Activated T-helper 1 cell treated with anti-CD3 and anti-CD28 coated beads, Interleukin-12 subunit alpha, Interleukin-12 subunit beta, Interleukin-2, Interleukin-4 antibody, amounts not matched to agents 30 ng/mL and 10 ng/mL and 1 ng/mL, durations not matched to agents 14 hours and 24 hours and 36 hours (primary cell): ENCODE measurements at regions of chr19 and their contacts with region 1.

Region 1: GRCh38 chr19:48738557-48739399 is 1.6 kb downstream of the RASIP1 start:
- DNase-seq: peak; percentile 85
- H3K4me3 Mint-ChIP-seq: peak overlapping the region; percentile 64
- H3K27ac Mint-ChIP-seq: peak overlapping the region; percentile 52
- H3K4me1 Mint-ChIP-seq: peaks cover 13% of the 10 kb centered on the region
- H3K27me3 Mint-ChIP-seq: no peaks in the 10 kb centered on the region

Region 2: GRCh38 chr19:48674921-48675824 is 63.6 kb before region 1 on chr19:
- intact Hi-C with region 1: loop called (anchors 2 kb)
- DNase-seq: peak; percentile 69
- H3K4me3 Mint-ChIP-seq: no peak overlapping the region
- H3K27ac Mint-ChIP-seq: no peak overlapping the region
- H3K4me1 Mint-ChIP-seq: peaks cover 8% of the 10 kb centered on the region
- H3K27me3 Mint-ChIP-seq: peaks cover 4% of the 10 kb centered on the region

Region 3: DNA sequence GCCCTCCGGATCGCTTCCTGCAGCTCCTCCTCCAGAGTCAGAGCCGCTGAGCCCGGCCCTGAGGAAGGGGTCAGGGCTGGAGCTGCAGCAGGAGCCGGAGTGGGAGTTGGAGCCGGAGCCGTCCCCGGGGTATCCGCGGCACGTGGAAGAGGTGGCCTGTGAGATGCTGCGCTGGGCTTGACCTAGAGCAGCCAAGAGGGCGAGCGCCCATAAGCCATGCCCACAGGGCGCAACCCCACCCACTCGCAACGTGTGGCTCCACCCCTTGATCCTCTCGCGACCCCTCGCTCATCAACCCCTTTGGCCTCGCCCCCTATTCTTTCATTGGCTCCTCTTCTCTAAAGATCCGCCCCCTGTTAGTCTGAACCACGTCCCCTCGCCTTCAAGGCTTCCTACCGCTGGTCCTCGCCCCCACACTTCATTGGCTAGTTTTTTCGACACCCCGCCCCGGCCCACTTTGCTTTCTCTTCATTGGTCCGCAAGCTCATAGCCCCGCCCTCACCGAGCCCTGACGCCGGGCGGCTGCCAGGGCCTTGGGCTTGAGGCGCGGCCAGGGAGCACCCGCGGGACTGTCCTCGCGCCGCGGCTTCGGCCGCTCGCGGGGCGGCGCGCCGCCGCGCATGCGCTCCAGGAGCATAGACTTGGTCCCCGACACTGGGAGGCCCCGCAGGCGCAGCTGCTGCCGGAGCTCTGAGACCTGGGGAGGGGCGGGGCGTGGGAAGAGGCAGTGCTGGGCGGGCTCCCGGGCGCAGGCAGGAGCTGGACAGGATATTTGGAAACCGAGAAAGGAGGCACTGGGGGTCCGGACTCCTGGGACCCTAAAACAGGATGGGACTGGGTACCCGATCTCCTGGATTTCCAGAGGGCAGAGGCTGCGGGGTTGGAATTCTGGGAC is 24.7 kb before region 1 on chr19:
- intact Hi-C with region 1: loop called (anchors 1 kb)
- DNase-seq: peak; percentile 98
- H3K4me3 Mint-ChIP-seq: peak overlapping the region; percentile 80
- H3K27ac Mint-ChIP-seq: peak overlapping the region; percentile 83
- H3K4me1 Mint-ChIP-seq: peaks cover 8% of the 10 kb centered on the region
- H3K27me3 Mint-ChIP-seq: peaks cover 1% of the 10 kb centered on the region

Region 4: GRCh38 chr19:48720613-48721296 is 18.0 kb before region 1 on chr19:
- intact Hi-C with region 1: loop called (anchors 1 kb)
- DNase-seq: peak; percentile 91
- H3K4me3 Mint-ChIP-seq: peak overlapping the region; percentile 92
- H3K27ac Mint-ChIP-seq: peak overlapping the region; percentile 98
- H3K4me1 Mint-ChIP-seq: peaks cover 23% of the 10 kb centered on the region
- H3K27me3 Mint-ChIP-seq: no peaks in the 10 kb centered on the region

Region 5: DNA sequence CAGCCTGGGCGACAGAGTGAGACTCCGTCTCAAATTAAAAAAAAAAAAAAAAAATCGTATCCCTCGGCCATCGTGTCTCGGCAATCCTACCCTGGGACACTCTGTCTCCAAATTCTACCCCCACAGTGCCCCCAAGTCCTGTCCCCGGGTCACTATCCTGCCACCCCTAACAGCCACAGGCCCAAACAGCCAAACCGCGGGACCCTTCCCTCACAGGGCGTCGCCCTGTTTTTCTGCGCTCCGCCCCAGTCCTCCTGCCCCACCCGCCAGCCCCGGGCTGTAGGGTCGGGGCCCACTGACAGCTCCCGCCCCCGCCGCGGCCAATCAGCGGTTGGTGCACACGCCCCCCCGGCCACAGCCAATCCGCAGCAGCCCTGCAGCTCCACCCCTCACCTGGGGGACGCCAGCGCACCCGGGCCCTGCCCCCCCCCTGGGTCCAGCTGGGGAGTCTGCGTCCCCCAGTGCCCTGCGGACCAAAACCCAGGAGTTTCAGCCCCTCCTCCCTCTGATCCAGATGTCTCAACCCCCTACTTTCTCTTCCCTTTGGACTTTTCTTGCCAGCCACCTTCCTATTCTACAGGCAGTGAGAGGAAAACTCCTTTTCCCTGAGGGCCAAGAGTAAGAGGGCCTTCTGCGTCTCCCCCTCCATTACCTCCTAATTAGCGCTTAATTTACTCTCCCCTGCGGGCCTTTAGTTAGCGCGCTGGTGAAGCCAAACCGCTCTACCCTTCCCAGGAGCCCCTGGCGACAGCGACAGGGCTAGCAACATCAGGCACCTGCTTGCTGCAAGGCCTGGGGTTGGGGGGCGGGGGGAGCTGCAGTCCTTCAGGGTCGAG is 73.5 kb after region 1 on chr19:
- intact Hi-C with region 1: loop called (anchors 2 kb)
- DNase-seq: peak; percentile 58
- H3K4me3 Mint-ChIP-seq: peak overlapping the region; percentile 76
- H3K27ac Mint-ChIP-seq: no peak overlapping the region
- H3K4me1 Mint-ChIP-seq: peaks cover 33% of the 10 kb centered on the region
- H3K27me3 Mint-ChIP-seq: peaks cover 2% of the 10 kb centered on the region

Region 6: DNA sequence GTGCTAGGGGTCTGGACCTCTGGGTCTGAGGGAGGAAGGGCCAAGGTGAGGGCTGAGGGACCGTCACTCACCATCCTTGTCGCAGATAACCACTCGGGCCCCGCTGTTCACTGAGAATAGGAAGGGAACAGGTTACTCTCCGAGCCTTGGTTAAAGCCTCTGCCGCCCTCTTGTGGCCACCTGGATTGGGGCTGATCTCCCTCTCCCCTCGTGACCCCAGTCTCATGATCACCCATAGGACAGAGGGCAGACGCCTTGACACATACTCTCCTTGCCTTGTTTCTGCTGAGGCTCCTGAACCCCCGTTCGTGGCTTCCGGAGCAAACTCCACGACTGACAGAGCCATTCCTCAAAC is 96.9 kb after region 1 on chr19:
- intact Hi-C with region 1: loop called (anchors 2 kb)
- DNase-seq: peak; percentile 87
- H3K4me3 Mint-ChIP-seq: peak overlapping the region; percentile 84
- H3K27ac Mint-ChIP-seq: peak overlapping the region; percentile 87
- H3K4me1 Mint-ChIP-seq: peaks cover 23% of the 10 kb centered on the region
- H3K27me3 Mint-ChIP-seq: peaks cover 7% of the 10 kb centered on the region

Region 7: DNA sequence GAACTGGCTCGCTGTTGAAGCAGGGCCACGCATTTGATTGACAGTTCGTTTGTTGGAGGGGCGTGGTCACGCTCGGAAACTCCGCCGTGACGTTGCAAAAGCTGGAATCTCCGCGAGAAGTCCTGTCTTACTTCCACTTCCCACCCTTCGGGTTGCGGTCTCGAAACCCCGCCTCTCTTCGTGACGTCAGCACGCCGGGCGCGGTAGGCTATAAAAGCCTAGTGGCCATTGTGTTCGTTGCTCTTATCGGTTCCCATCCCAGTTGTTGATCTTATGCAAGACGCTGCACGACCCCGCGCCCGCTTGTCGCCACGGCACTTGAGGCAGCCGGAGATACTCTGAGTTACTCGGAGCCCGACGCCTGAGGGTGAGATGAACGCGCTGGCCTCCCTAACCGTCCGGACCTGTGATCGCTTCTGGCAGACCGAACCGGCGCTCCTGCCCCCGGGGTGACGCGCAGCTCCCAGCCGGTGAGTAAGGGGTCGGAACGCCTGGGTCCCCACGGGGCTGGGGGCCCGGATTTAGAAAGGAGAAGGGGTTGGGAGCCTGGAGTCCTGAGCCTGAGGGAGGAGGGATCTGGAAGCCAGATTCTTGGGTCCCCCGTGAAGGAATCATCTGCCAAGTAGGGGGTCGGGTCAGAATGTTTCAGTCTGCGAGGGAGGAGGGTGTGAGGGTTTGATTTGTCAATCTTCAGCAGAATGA is 133.6 kb after region 1 on chr19 and contains the start of gene PPP1R15A:
- intact Hi-C with region 1: no loop called
- DNase-seq: peak; percentile 99
- H3K4me3 Mint-ChIP-seq: peak within 1 kb of the TSS; percentile 97
- H3K27ac Mint-ChIP-seq: peak within 1 kb of the TSS; percentile 99
- H3K4me1 Mint-ChIP-seq: peaks cover 42% of the 10 kb centered on the region
- H3K27me3 Mint-ChIP-seq: peaks cover 4% of the 10 kb centered on the region
- total RNA-seq, gene PPP1R15A: 53.1 and 53.7 TPM in 2 replicates